GM10248 (cell line): ENCODE measurements at regions of chr5 and their contacts with region 1.

Region 1: DNA sequence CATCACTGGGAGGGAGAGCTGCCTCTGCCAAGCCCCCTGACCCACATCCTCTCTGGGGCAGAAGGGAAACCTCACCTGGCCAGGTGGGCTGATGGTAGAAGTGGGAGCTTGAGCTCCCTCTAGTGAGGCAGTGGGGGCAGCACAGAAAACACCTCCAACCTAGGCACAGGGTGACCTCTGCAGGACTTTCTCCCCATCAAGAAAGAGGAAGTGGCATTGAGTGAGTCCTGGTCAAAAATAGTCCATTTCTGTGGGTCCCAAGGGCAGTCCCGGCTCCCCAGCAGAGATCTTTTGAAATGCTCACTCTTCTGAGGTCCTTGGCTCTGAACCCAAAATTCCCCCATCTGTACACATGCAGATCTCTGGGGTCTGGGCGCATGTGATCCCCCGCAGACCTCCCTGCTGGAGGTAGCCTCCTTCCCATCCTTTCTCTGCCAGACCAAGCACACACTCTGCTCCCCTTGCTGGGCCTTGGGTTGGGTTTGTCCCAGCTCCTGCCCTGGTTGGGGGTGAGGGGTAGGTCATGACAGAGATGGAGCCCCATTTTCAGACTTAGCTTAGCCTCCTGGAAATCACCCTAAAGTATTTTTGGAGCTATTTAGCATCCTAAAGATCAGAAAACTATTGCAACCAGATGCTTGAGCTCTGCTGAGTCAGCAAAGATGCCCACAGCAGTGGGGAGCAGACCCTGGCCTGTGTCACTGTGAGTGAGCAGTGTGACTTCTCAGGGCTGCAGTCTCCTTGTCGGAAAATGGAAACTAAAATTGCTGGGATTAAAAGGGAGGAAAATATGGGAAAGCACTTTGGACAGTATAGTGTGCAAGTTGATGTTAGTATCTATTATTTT is 41.6 kb upstream of the LCP2 start:
- DNase-seq: peak; percentile 82
- CTCF ChIP-seq: peak; percentile 99

Region 2: GRCh38 chr5:169736653-169737052 is 602.5 kb before region 1 on chr5:
- CTCF ChIA-PET with region 1: no interaction called
- POLR2A ChIA-PET with region 1: no interaction called
- DNase-seq: no peak
- CTCF ChIP-seq: no peak

Region 3: GRCh38 chr5:170211575-170212334 is 127.4 kb before region 1 on chr5:
- CTCF ChIA-PET with region 1: no interaction called
- POLR2A ChIA-PET with region 1: no interaction called
- DNase-seq: no peak
- CTCF ChIP-seq: no peak

Region 4: GRCh38 chr5:170247363-170247762 is 91.8 kb before region 1 on chr5:
- CTCF ChIA-PET with region 1: interaction called, 12 read pairs
- POLR2A ChIA-PET with region 1: no interaction called
- DNase-seq: no peak
- CTCF ChIP-seq: no peak

Region 5: DNA sequence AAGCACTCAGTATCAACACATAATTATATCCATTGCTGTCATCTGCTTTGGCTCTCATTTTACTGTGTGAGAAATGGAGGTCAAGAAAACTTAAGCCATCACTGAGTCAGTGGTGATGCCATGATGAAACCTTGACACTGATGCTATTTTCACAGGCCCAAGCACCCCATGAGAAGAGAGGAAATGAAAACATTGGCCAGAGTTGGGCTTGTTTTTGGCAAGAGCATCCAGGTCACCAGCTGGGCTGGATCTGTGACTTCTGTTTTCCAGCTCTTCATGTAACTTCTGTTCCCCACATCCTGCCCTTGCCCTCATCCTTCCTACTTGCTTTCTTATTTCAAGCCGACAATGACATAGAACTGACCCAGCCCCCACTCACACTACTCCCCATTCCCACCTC is 51.6 kb before region 1 on chr5:
- CTCF ChIA-PET with region 1: interaction called, 15 read pairs
- POLR2A ChIA-PET with region 1: no interaction called
- DNase-seq: no peak
- CTCF ChIP-seq: no peak

Region 6: GRCh38 chr5:170312666-170313065 is 26.5 kb before region 1 on chr5:
- CTCF ChIA-PET with region 1: interaction called, 18 read pairs
- POLR2A ChIA-PET with region 1: no interaction called
- DNase-seq: no peak
- CTCF ChIP-seq: no peak

Region 7: GRCh38 chr5:170327168-170327567 is 12.0 kb before region 1 on chr5:
- CTCF ChIA-PET with region 1: interaction called, 15 read pairs
- POLR2A ChIA-PET with region 1: no interaction called
- DNase-seq: no peak
- CTCF ChIP-seq: no peak

Region 8: DNA sequence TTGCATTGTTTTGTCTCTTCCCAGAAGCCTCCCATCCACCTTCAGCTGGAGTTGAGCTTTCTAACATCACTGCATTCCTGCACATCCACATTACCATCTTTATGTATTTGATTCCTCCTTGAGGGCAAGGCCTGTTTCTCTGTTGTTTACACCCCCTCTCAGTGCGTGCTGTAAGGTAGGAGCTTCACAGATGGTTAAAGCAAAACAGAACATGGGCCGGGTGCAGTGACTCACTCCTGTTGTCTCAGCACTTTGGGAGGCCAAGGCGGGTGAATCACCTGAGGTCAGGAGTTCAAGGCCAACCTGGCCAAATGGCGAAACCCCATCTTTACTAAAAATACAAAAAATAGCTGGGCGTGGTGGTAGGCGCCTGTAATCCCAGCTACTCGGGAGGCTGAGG is 275.6 kb after region 1 on chr5:
- CTCF ChIA-PET with region 1: no interaction called
- POLR2A ChIA-PET with region 1: no interaction called
- DNase-seq: no peak
- CTCF ChIP-seq: no peak